B cell (primary cell): ENCODE measurements at regions of chr4 and their contacts with region 1.

Region 1: DNA sequence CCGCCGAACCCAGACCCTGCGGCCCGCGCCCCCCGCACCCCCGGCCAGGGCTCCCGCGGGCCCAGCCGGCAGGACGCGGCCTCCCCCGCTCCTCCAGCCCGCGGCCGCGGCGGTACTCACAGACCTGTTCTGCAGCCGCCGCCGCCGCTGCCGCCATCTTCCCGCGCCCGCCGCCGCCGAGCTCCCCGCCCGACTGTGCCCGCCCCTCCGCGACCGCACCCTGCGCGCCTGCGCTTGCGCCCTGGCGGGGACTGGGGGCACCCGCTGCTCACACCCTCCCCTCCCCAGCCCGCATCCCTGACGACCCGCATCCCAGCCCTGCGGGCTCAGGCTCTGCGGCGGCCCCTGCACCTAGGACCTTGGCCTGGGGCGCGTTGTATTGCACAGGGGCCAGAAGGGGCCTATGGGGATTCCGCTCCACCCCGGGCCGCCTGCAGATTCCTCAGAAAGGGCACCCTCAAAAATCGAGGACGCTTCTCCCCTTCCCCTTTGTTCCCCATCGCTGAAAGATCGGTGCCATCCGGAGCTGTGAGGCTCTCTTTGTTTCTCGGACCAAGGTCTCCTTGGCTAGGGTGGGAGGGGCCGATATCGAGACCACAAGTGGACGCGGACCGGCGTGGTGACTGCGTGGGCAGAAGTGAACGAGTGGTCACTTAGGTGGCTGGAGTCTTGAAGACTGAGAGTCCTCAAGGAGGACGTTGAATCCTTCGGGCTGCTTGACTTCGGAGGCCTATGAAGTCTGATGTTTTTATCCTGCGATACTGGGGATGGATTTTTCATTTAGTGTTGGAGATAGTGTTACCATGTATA is at the start of gene SGCB:
- DNase-seq: peak; percentile 73
- ATAC-seq: peak; percentile 94
- H3K4me3 ChIP-seq: peak within 1 kb of the TSS; percentile 21 to 70 (median 67)
- H3K4me3 Mint-ChIP-seq: peak within 1 kb of the TSS; percentile 84
- H3K27ac ChIP-seq: no peak within 1 kb of the TSS
- H3K27ac Mint-ChIP-seq: peak within 1 kb of the TSS; percentile 71
- H3K4me1 ChIP-seq: peaks cover 11 to 21% of the 10 kb centered on the region in 2 donors
- H3K4me1 Mint-ChIP-seq: peaks cover 29% of the 10 kb centered on the region
- H3K27me3 ChIP-seq: peaks cover 0 to 30% (median 13%) of the 10 kb centered on the region in 4 experiments
- H3K27me3 Mint-ChIP-seq: peaks cover 22% of the 10 kb centered on the region
- CTCF ChIP-seq: no peak
- total RNA-seq, gene SGCB: 9.7 and 12.8 TPM in 2 replicates

Region 2: DNA sequence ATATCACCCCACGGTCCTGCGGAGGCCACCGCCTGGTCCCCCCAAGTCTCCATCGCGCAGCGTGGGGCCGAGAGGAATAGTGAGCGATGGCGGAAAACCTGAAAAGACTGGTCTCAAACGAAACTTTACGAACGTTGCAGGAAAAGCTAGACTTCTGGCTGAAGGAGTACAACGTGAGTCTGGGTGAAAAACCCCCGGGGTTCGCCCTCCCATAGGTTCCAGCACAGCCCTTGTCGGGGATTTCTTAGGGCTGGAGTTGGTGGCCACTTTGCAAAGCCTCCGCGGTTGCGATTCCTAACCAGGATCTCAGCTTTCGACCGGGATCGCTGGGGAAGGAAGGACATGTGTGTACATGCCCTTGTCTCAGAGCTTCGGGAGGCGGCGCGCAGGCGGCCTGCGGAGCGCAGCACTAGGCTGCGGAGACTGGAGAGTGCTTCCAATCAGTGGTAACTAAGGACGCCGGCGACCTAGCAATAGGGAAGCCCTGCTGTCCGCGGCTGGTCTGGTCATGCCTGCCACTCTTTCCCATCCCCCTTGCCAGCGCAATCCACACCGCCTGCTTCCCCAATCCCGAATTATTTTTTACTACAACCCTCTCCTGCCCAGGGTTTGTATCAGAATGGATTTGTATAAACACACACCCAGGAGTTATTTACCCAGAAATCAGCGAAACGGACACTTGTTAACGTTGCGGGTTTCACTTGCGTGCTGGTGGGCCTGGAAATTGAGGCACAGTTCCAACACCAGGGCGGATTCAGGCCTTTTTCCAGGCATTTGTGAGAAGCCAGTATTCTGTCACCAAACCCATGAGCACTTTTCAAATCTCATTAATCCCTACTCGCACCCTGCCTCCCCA is 13.5 kb after region 1 on chr4:
- CTCF ChIA-PET with region 1: no interaction called
- POLR2A ChIA-PET with region 1: interaction called, 3 read pairs
- intact Hi-C with region 1: loop called (anchors 1 kb)
- DNase-seq: peak; percentile 33
- ATAC-seq: peak; percentile 35
- H3K4me3 ChIP-seq: peak overlapping the region in 4 of 5 experiments; percentile 25 to 73 (median 53)
- H3K4me3 Mint-ChIP-seq: peak overlapping the region; percentile 81
- H3K27ac ChIP-seq: no peak overlapping the region
- H3K27ac Mint-ChIP-seq: no peak overlapping the region
- H3K4me1 ChIP-seq: peaks cover 18 to 22% of the 10 kb centered on the region in 2 donors
- H3K4me1 Mint-ChIP-seq: peaks cover 29% of the 10 kb centered on the region
- H3K27me3 ChIP-seq: peaks cover 0 to 46% (median 28%) of the 10 kb centered on the region in 4 experiments
- H3K27me3 Mint-ChIP-seq: peaks cover 34% of the 10 kb centered on the region
- CTCF ChIP-seq: no peak